Aorta (tissue), 5 donors: ENCODE measurements at regions of chr17 and their contacts with region 1.

Region 1: DNA sequence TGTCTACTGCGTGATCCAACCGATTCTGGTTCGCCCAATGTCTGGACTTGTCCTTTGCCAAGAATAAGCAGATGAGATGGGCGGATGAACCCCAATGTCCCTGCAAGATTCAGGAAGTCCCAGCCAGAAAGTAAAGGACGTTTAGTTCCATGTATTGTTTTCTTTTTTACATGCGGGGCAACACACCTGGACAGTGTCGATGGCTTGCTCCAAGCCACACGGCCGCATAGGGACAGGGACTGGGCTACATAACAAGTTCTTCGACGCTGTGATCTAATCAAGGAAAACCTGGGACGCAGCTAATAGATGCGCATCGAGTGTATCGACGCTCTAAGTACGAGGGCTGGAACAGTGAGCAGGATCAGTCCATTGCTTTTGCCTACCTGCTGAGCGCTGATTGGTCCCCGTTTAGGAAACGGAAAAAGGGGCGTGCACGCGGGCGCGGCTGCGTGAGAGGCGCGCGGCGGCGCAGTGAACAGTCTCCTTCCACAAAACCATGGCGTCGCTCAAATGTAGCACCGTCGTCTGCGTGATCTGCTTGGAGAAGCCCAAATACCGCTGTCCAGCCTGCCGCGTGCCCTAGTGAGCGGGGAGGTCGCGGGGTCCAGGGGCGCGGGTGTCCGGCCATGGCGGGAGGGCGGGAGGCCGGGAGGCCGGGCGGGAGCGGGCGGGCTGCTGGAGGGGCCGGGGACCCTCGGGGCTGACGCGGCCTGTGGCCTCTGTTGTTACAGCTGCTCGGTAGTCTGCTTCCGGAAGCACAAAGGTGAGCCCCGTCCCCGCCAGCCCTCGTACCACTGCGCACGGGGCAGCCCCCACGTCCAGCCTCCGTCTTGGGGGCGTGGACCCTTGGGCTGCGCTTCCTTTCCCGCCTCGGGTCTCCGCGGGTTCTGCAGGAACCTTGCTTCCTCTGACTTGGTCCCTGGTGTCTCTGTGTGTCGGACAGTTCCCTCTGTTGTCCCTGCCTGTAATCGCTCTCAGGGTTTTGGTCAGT is at the start of gene ZNHIT3:
- DNase-seq: peak; percentile 94 to 95
- ATAC-seq: peak; percentile 95
- H3K4me3 ChIP-seq: peak within 1 kb of the TSS; percentile 86 to 91
- H3K27ac ChIP-seq: peak within 1 kb of the TSS in 1 of 2 donors; percentile 1
- H3K4me1 ChIP-seq: no peaks in the 10 kb centered on the region
- H3K27me3 ChIP-seq: no peaks in the 10 kb centered on the region
- total RNA-seq, gene ZNHIT3: 20.2 to 21.8 TPM

Region 2: DNA sequence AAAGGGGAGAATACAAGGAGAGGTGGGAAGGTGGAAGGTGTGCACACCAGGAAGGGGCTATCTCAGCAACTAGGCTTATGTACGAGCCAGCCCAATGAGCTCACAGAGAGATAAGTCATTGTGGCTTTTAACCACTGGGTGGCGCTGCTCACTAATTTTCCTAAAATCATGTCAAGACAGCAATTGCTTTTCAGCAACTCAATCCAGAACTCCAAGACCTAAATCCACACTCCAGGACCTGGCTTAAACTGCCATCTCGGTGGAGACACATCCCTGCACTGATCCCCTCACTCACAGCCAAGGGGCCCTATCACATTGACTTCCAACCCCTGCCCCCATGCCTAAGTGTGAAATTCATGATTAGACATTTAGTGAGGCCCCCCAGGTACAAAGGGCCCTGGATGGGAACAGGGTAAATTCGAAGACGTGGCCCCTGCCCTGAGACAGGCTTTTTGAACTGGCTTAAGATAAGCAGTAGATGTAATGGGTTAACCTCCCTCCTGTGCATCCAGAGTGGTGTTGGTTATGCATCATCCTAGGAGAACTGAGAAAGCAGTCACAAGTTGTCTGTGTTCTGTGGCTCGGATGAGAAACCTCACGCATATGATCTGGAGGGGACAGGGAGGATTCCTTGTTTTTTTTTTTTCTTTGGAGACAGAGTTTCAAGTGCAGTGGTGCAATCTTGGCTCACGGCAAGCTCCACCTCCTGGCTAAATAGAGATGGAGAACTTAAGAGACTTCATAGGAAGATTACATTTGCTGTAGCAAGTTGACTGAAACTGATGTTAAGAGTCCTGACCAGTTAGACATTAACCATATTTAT is 516.7 kb before region 1 on chr17:
- intact Hi-C with region 1: loop called (anchors 10 kb)
- DNase-seq: peak; percentile 74 to 82
- ATAC-seq: peak; percentile 72
- H3K4me3 ChIP-seq: no peak overlapping the region
- H3K27ac ChIP-seq: no peak overlapping the region
- H3K4me1 ChIP-seq: no peaks in the 10 kb centered on the region
- H3K27me3 ChIP-seq: no peaks in the 10 kb centered on the region

Region 3: GRCh38 chr17:36148559-36149295 is 337.8 kb before region 1 on chr17:
- intact Hi-C with region 1: loop called in 1 of 2 experiments (anchors 10 kb)
- DNase-seq: peak; percentile 73 to 92
- ATAC-seq: peak; percentile 90
- H3K4me3 ChIP-seq: no peak overlapping the region
- H3K27ac ChIP-seq: no peak overlapping the region
- H3K4me1 ChIP-seq: no peaks in the 10 kb centered on the region
- H3K27me3 ChIP-seq: no peaks in the 10 kb centered on the region

Region 4: DNA sequence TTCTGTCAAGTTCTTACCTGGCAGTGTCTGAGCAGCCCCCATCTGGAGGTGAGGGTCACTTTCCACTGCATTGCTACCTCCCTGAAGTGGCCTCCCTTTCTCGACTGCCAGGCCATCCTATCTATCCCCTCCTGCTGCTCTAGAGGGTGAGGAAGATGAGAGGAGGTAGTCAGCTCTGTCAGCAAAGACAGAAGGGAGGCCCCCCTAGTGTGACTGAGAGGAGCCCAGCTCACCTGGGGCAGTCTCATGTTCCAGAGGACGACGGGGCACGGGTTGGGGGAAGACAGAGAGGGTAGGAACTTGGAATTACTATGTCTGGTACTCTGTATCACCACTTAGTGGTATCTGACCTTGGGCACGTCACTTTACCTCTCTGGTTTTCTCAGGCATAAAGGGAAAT is 26.1 kb after region 1 on chr17:
- intact Hi-C with region 1: no loop called
- DNase-seq: no peak
- ATAC-seq: no peak
- H3K4me3 ChIP-seq: no peak overlapping the region
- H3K27ac ChIP-seq: no peak overlapping the region
- H3K4me1 ChIP-seq: no peaks in the 10 kb centered on the region
- H3K27me3 ChIP-seq: no peaks in the 10 kb centered on the region

Region 5: GRCh38 chr17:36524428-36524876 is 38.0 kb after region 1 on chr17:
- intact Hi-C with region 1: no loop called
- DNase-seq: peak in 1 of 2 donors; percentile 42
- ATAC-seq: no peak
- H3K4me3 ChIP-seq: no peak overlapping the region
- H3K27ac ChIP-seq: no peak overlapping the region
- H3K4me1 ChIP-seq: no peaks in the 10 kb centered on the region
- H3K27me3 ChIP-seq: no peaks in the 10 kb centered on the region

Region 6: GRCh38 chr17:36534840-36535668 is 48.6 kb after region 1 on chr17 and contains the starts of genes MYO19 and PIGW:
- intact Hi-C with region 1: loop called in 1 of 2 experiments (anchors 10 kb)
- DNase-seq: peak; percentile 93 to 97
- ATAC-seq: peak; percentile 97
- H3K4me3 ChIP-seq: peak within 1 kb of the TSS; percentile 56 to 78
- H3K27ac ChIP-seq: peak within 1 kb of the TSS in 1 of 2 donors; percentile 88
- H3K4me1 ChIP-seq: no peaks in the 10 kb centered on the region
- H3K27me3 ChIP-seq: no peaks in the 10 kb centered on the region
- total RNA-seq, gene MYO19: 37.1 to 57.3 TPM
- total RNA-seq, gene PIGW: 4.7 to 4.9 TPM

Region 7: GRCh38 chr17:36591434-36592315 is 105.2 kb after region 1 on chr17 and contains the start of gene DHRS11:
- intact Hi-C with region 1: loop called in 1 of 2 experiments (anchors 10 kb)
- DNase-seq: peak; percentile 87 to 96
- ATAC-seq: peak; percentile 95
- H3K4me3 ChIP-seq: peak within 1 kb of the TSS; percentile 30 to 83
- H3K27ac ChIP-seq: no peak within 1 kb of the TSS
- H3K4me1 ChIP-seq: no peaks in the 10 kb centered on the region
- H3K27me3 ChIP-seq: no peaks in the 10 kb centered on the region
- total RNA-seq, gene DHRS11: 6.0 to 6.5 TPM

Region 8: DNA sequence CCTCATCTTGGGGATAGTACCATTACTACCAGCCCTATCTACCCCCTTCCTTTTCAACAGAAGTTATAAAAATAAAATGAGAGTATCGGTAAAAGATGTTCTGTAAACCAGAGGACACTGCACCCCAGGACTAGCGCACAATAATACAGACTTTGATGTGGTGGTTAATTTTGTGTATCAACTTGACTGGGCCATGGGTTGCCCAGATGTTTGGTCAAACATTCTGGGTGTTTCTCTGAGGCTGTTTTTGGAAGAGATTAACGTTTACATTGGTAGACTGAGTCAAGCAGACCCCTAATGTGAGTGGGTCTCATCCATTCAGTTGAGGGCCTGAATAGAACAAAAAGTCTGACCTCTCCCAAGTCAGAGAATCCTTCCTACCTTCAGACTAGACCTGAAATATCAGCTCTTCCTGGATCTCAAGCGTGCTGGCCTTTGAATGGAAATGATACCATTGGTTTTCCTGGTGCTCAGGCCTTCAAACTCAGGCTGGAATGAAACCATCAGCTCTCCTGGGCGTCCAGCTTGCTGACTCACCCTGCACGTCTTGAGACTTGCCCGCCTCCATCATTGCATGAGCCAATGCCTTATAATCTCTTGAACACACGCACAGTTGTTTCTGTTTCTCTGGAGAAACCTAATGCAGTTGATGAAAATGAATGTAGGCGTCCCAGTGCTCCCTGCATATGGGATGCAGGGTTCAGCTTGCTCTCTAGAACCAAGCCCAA is 125.0 kb after region 1 on chr17:
- intact Hi-C with region 1: no loop called
- DNase-seq: no peak
- ATAC-seq: no peak
- H3K4me3 ChIP-seq: no peak overlapping the region
- H3K27ac ChIP-seq: no peak overlapping the region
- H3K4me1 ChIP-seq: no peaks in the 10 kb centered on the region
- H3K27me3 ChIP-seq: no peaks in the 10 kb centered on the region

Region 9: DNA sequence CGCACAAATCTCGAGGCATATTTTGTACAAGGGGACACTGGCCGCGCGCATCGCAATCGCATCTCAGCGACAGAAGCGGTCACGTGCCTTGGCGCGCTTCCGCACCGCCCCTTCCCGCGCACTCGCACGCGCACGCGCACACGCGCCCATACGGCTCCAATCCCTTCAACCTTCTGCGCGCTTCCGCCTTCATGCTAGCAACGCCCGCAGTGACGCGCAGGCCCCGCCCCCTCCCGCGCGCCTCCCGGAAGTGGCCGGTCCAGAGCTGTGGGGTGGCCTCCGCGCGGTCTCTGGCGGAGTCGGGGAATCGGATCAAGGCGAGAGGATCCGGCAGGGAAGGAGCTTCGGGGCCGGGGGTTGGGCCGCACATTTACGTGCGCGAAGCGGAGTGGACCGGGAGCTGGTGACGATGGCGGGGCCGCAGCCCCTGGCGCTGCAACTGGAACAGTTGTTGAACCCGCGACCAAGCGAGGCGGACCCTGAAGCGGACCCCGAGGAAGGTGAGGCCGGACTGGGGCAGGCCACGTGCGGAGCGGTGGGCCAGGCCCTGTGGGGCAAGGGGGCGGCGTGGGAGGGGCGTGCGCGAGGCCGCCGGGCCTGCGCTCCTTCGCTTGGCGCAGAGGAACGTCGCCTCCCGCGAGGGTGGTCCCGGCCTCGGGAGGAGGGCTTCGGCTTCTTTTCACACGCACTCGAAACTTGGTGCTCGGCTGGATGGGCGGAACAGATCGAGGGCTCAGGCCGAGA is 462.4 kb after region 1 on chr17 and contains the start of gene AATF:
- intact Hi-C with region 1: loop called in 1 of 2 experiments (anchors 10 kb)
- DNase-seq: peak; percentile 98 to 99
- ATAC-seq: peak; percentile 99
- H3K4me3 ChIP-seq: peak within 1 kb of the TSS; percentile 35 to 71
- H3K27ac ChIP-seq: peak within 1 kb of the TSS; percentile 16 to 72
- H3K4me1 ChIP-seq: peaks cover 0 to 3% of the 10 kb centered on the region in 2 donors
- H3K27me3 ChIP-seq: peaks cover 0 to 2% of the 10 kb centered on the region in 2 donors
- total RNA-seq, gene AATF: 36.1 to 41.0 TPM